Activated B cell treated with CpG ODN at 0.5 μM for 24 hours (primary cell): ENCODE measurements at regions of chr4 and their contacts with region 1.

Region 1: DNA sequence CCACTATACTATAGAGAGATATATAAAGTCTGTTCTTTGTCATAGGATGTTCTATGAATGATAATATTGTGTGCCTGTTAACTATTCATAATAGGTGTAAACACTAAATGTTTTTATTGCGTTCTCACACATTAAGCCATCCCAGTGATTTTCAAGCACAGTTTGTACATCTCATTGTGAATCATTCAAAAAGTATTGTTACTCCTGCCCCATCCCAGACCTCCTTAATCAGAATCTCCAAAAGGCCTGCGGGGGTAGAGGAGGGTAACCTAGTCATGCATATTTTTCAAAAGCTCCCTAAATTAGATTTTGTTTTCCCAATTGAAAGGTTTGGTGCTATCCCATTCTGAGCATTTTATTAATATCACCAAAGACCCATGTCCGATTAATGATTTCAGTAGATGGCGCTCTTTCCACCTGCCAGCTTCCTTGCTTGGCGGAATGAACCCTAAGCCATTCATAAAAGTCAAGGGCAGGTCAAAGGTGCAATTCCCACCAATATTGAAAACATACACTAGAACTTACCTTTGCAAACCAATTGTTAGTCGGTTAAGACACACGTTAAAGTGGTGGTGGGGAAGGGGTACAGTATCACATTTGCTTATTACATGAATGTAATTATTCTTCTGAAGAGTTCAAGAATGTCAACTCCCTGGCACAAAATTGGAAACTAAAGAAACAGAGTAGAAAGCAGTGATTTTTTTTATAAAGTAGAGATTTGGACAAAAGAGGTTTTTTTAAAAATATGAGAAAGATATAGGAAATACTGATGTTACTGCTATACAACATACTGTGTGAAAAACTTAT is 5.8 kb upstream of the TET2 start:
- DNase-seq: no peak
- ATAC-seq: peak; percentile 28
- H3K4me3 Mint-ChIP-seq: no peak overlapping the region
- H3K27ac Mint-ChIP-seq: no peak overlapping the region
- H3K4me1 Mint-ChIP-seq: peaks cover 16% of the 10 kb centered on the region
- H3K27me3 Mint-ChIP-seq: no peaks in the 10 kb centered on the region
- CTCF ChIP-seq: no peak

Region 2: GRCh38 chr4:105036991-105037390 is 103.9 kb before region 1 on chr4:
- CTCF ChIA-PET with region 1: no interaction called
- POLR2A ChIA-PET with region 1: no interaction called
- intact Hi-C with region 1: no loop called
- DNase-seq: no peak
- ATAC-seq: no peak
- H3K4me3 Mint-ChIP-seq: no peak overlapping the region
- H3K27ac Mint-ChIP-seq: no peak overlapping the region
- H3K4me1 Mint-ChIP-seq: no peaks in the 10 kb centered on the region
- H3K27me3 Mint-ChIP-seq: peaks cover 1% of the 10 kb centered on the region
- CTCF ChIP-seq: no peak

Region 3: DNA sequence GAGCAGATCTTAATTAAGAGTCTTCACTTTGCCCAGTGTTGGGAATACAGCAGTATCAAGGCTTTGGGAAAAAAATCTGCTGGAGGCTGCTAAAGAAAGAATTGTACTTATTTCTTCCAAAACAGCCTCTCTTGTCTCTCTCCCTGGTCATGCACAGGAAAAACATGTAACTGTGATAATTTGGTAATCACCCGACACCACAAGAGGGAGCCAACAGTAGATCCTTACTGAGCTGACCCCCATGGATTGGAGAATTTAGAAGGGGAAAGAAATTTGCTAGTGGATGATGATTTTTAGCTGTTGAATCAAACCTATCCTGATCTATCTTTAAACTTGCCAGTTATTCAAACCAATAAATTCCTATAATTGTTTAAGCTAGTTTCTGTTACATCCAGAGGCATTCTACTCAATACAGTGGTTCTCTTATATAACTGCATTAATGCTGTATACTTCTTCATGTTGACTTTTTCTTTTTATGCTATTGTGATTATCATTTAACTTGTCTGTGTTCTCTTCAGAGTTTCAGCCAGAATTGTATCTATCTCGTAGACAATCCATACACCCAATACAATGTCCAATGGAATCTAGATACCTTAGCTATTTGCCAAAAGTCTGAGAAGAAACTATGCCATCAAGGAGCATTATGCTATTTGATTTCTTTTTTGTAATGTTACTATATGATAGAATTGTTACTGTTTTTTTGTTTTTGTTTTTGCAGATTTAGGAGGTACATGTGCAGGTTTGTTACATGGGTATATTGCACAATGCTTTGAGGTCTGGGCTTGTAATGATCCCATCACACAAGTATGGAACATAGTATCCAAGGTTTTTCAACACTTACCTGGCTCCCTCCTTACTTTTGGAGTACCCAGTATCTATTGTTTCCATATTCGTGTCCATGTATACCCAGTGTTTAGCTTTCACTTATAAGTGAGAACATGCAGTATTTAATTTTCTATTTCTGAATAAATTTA is 380.2 kb after region 1 on chr4:
- CTCF ChIA-PET with region 1: no interaction called
- POLR2A ChIA-PET with region 1: no interaction called
- intact Hi-C with region 1: loop called (anchors 2 kb)
- DNase-seq: no peak
- ATAC-seq: no peak
- H3K4me3 Mint-ChIP-seq: no peak overlapping the region
- H3K27ac Mint-ChIP-seq: no peak overlapping the region
- H3K4me1 Mint-ChIP-seq: no peaks in the 10 kb centered on the region
- H3K27me3 Mint-ChIP-seq: no peaks in the 10 kb centered on the region
- CTCF ChIP-seq: no peak